Posterior cingulate gyrus (tissue), 11 donors: ENCODE measurements at regions of chr3 and their contacts with region 1.

Region 1: GRCh38 chr3:105366326-105367062 is at the start of gene ALCAM:
- DNase-seq: peak; percentile 93 to 99 (median 96)

Region 2: GRCh38 chr3:104564045-104564643 is 802.4 kb before region 1 on chr3:
- intact Hi-C with region 1: loop called (anchors 10 kb)
- DNase-seq: peak in 4 of 10 donors; percentile 6 to 54 (median 32)

Region 3: GRCh38 chr3:104628185-104628789 is 738.2 kb before region 1 on chr3:
- intact Hi-C with region 1: loop called (anchors 1 kb)
- DNase-seq: no peak

Region 4: DNA sequence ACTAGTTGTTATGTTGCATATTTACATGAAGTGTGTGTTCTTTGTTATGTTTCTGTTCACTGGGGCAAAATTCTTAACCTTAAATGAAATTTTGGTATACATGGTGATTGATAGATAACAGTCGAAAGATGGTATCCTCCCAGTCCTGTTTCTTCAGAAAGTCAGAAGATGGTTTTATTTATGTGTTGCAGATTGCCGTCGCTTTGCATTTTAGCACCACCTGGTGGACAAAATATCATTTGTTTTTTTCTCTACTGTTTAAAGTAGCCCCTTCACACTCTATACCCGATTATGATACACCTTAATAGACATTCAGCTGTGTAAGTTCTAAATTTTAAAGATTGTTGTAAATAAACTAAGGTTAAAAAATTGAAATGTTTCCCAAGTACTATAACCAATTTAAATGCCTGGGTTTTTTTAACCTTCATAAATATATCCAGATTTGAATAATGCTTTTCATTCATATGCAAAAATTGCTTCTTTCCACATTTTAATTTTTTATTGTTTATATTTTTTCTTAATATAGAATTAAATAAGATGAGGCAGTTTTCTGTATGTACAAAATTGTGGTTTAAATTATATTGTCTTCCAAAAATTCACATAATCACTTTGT is 152.4 kb after region 1 on chr3:
- intact Hi-C with region 1: loop called (anchors 1 kb)
- DNase-seq: peak in 1 of 10 donors; percentile 20